H1 (cell line): ENCODE measurements at regions of chr11 and their contacts with region 1.

Region 1: GRCh38 chr11:73787643-73788537 is at the start of gene MRPL48:
- DNase-seq: peak; percentile 78 to 94
- H3K4me3 ChIP-seq: peak within 1 kb of the TSS; percentile 74 to 98 (median 88)
- H3K27ac ChIP-seq: peak within 1 kb of the TSS; percentile 98
- H3K4me1 ChIP-seq: peaks cover 3 to 8% (median 6%) of the 10 kb centered on the region in 4 experiments; a peak in 4 of 7 replicates
- H3K27me3 ChIP-seq: no peaks in the 10 kb centered on the region
- CTCF ChIP-seq: no peak
- EP300 ChIP-seq: peak in 1 of 2 experiments; percentile 62; a peak in 1 of 3 replicates
- POLR2A ChIP-seq: peak; percentile 77 to 98
- RAD21 ChIP-seq: no peak; a peak in 1 of 4 replicates
- total RNA-seq, gene MRPL48: 59.9 and 60.7 TPM in 2 replicates

Region 2: DNA sequence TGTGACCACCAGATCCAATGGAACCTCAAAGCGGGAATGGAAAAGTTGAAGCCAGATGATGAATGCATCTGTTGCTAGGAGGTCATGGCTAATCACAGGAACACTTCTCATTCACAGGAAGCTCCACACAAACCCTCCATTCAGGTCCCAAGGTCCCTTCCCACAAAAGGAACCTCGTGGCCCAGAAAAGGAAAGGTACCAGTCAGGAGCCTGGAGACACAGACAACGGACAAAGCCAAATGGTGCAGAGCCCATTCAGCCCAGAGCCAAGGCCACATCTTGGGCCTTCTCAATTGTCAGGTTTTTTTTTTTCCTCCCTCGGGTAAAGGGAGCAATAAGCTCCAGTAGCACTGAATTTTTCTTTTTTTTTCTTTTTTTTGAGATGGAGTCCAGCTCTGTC is 277.0 kb before region 1 on chr11:
- CTCF ChIA-PET with region 1: no interaction called
- POLR2A ChIA-PET with region 1: no interaction called
- DNase-seq: no peak
- H3K4me3 ChIP-seq: no peak overlapping the region
- H3K27ac ChIP-seq: no peak overlapping the region
- H3K4me1 ChIP-seq: no peaks in the 10 kb centered on the region
- H3K27me3 ChIP-seq: no peaks in the 10 kb centered on the region
- CTCF ChIP-seq: no peak
- EP300 ChIP-seq: no peak
- POLR2A ChIP-seq: no peak
- RAD21 ChIP-seq: no peak

Region 3: DNA sequence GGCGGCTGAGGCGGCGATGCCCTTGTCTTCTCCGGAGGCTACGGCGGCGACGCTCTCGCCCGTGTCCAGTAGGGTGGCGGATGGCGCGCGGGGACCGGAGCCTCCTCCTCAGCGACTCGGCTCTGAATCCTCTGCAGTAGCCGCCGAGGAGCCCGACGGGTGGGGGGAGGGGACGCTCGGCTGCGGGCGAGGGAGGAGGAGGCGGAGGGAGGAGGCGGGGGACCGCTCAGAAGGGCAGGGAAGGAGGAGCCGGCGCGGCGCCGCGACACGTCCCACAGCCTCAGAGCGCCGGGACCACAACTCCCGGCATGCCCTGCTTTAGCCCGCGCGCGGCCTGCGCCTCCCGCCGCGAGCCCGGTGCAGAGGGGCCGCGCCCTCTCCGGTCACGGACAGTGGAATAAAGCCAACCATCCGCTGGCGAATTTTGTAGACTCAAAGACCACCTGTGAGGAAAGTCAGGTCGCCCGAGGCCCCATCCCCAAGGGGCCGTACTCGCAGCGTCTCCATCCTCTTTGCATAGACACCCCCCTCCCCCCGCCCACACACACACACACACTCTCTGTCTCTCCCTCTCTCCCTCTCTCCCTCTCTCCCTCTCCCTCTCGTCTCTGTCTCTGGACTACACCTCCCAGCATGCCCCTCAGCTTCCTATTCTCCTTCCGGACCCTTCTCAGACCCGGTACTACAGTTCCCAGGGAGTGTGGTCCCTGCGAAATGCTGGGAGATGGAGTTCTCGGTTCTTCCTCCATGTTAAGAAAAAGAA is 189.8 kb before region 1 on chr11 and contains the start of gene FAM168A:
- CTCF ChIA-PET with region 1: no interaction called
- POLR2A ChIA-PET with region 1: no interaction called
- DNase-seq: peak; percentile 89 to 91
- H3K4me3 ChIP-seq: peak within 1 kb of the TSS; percentile 80 to 95 (median 90)
- H3K27ac ChIP-seq: peak within 1 kb of the TSS; percentile 78; the same call in 1 of the 2 replicates
- H3K4me1 ChIP-seq: peaks cover 3 to 10% (median 7%) of the 10 kb centered on the region in 4 experiments; a peak in 6 of 7 replicates
- H3K27me3 ChIP-seq: no peaks in the 10 kb centered on the region
- CTCF ChIP-seq: peak in 1 of 3 experiments; percentile 15; a peak in 1 of 4 replicates
- EP300 ChIP-seq: no peak; a peak in 1 of 3 replicates
- POLR2A ChIP-seq: peak in 1 of 2 experiments; percentile 79; a peak in 2 of 3 replicates
- RAD21 ChIP-seq: peak in 1 of 2 experiments; percentile 25; a peak in 2 of 4 replicates
- total RNA-seq, gene FAM168A: 21.6 and 22.8 TPM in 2 replicates

Region 4: DNA sequence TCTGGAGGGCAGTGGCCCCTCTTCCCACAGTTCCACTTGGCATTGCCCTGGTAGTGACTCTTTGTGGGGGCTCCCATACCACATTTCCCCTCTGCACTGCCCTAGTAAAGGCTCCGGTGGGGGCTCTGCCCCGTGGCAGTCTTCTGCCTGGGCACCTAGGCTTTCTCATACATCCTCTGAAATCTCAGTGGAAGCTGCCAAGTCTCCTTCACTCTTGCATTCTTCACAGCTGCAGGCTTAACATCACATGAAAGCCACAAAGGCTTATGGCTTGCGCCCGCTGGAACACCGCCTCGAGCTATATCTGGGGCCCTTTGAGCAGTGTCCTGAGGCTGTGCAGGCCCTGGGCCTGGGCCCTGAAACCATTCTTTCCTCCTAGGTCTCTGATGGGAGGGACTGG is 116.2 kb before region 1 on chr11:
- CTCF ChIA-PET with region 1: no interaction called
- POLR2A ChIA-PET with region 1: no interaction called
- DNase-seq: no peak
- H3K4me3 ChIP-seq: no peak overlapping the region
- H3K27ac ChIP-seq: no peak overlapping the region
- H3K4me1 ChIP-seq: no peaks in the 10 kb centered on the region
- H3K27me3 ChIP-seq: no peaks in the 10 kb centered on the region
- CTCF ChIP-seq: no peak
- EP300 ChIP-seq: no peak
- POLR2A ChIP-seq: no peak
- RAD21 ChIP-seq: no peak

Region 5: DNA sequence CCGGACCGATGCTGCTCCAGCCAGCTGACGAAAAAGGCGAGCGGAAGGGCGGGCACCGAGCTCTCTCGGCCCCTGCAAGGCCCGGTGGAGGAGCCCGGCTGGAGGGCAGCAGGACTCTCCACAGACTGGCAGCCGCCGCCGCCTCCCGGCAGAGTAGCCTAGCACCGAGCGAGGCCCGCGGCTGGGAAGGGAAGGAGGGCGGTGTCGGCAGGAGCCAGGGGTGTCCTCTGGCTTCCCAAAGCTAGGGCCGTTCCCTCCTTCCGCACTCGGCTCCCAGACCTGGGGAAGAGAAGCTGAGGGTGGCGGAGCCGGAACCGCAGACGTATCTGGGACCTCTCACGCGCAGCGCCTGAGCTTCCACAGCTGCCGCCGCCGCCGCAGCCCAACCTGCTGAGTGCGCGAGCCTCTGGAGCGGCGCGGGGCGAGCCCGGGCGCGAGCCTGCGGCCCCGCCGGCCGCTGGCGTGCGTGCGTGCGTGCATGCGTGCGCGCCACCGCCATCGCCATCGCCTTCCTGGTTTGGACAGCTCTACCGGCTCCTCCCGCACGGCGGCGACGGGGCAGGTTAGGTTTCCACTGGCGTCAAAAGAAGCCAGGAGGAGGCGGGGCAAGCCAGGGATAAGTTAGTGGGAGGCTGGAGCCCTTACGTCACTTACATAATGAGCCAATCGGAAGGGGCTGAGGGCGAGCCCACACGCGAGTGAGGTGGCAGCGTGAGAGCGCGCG is 27.0 kb before region 1 on chr11 and contains the start of gene RAB6A:
- CTCF ChIA-PET with region 1: interaction called, 6 read pairs
- POLR2A ChIA-PET with region 1: interaction called, 33 read pairs
- DNase-seq: peak; percentile 100
- H3K4me3 ChIP-seq: peak within 1 kb of the TSS; percentile 92 to 95 (median 94)
- H3K27ac ChIP-seq: peak within 1 kb of the TSS; percentile 82; the same call in 1 of the 2 replicates
- H3K4me1 ChIP-seq: peaks cover 0 to 4% (median 0%) of the 10 kb centered on the region in 4 experiments; a peak in 1 of 7 replicates
- H3K27me3 ChIP-seq: no peaks in the 10 kb centered on the region
- CTCF ChIP-seq: peak; percentile 49 to 57 (median 54)
- EP300 ChIP-seq: no peak; a peak in 1 of 3 replicates
- POLR2A ChIP-seq: peak; percentile 58 to 76
- RAD21 ChIP-seq: peak; percentile 43 to 51; a peak in 3 of 4 replicates
- total RNA-seq, gene RAB6A: 88.6 and 89.3 TPM in 2 replicates

Region 6: GRCh38 chr11:73856031-73856567 is 68.2 kb after region 1 on chr11:
- CTCF ChIA-PET with region 1: no interaction called
- POLR2A ChIA-PET with region 1: interaction called, 13 read pairs
- DNase-seq: no peak
- H3K4me3 ChIP-seq: no peak overlapping the region
- H3K27ac ChIP-seq: no peak overlapping the region
- H3K4me1 ChIP-seq: peaks cover 0 to 8% (median 6%) of the 10 kb centered on the region in 4 experiments; a peak in 3 of 7 replicates
- H3K27me3 ChIP-seq: no peaks in the 10 kb centered on the region
- CTCF ChIP-seq: no peak
- EP300 ChIP-seq: no peak
- POLR2A ChIP-seq: no peak
- RAD21 ChIP-seq: no peak

Region 7: DNA sequence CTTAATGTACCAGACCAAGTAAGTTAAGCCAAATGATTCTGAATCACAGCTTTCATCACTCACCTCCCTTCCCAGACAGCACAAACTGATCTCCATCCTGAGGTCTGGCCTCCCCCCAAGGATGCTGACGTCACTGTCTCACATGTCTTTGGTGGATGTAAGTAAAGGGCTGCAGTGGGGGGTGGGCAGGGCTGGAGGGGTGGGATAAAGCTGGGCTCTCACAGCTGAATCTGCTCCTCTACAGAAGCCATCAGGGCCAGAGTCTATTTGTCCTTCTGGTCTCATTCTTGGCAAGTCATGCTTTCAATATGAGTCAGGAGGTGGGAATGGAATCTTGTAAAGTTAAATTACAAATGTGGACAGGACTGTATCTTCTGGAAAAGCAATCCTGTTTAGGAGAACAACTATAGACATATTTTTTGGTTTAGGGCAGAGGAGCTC is 490.9 kb after region 1 on chr11:
- CTCF ChIA-PET with region 1: no interaction called
- POLR2A ChIA-PET with region 1: no interaction called
- DNase-seq: no peak
- H3K4me3 ChIP-seq: no peak overlapping the region
- H3K27ac ChIP-seq: no peak overlapping the region
- H3K4me1 ChIP-seq: no peaks in the 10 kb centered on the region
- H3K27me3 ChIP-seq: no peaks in the 10 kb centered on the region
- CTCF ChIP-seq: no peak
- EP300 ChIP-seq: no peak
- POLR2A ChIP-seq: no peak
- RAD21 ChIP-seq: no peak